Gastrocnemius medialis (tissue), 4 donors: ENCODE measurements at regions of chr2 and their contacts with region 1.

Region 1: GRCh38 chr2:130342533-130343275 is at the start of gene IMP4:
- DNase-seq: peak; percentile 99
- ATAC-seq: peak; percentile 96 to 97
- H3K4me3 ChIP-seq: peak within 1 kb of the TSS; percentile 76 to 99 (median 89)
- H3K27ac ChIP-seq: peak within 1 kb of the TSS; percentile 87 to 91 (median 88)
- H3K4me1 ChIP-seq: peaks cover 14 to 21% of the 10 kb centered on the region in 2 donors
- H3K27me3 ChIP-seq: no peaks in the 10 kb centered on the region
- CTCF ChIP-seq: peak in 4 of 5 experiments; percentile 19 to 35 (median 31)
- POLR2A ChIP-seq: peak; percentile 46 to 67
- total RNA-seq, gene IMP4: 114 to 179 (median 149) TPM

Region 2: DNA sequence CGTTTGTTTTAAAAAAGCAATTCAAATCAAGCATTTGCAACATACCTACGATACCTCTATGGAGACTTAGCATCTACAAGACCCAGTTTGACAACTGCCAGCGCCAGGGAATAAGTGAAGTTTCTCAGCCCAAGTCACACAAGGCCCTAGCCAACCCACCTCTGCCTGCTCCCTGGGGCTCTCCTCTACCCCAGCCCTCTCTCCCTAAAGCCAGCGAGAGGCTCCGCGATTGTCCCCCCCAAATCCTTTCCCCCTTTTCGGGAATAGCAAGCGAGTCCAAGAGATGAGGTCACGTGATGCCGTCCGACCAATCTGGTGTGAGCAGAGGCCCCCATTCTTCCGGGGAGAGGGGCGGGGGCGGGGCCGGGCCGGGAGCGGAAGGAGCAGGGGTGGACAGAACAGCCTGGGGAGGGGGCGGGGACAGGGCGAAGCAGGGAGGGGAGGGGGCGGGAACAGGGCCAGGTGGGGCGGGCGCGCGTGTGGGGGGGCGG is 465.4 kb before region 1 on chr2:
- in situ Hi-C with region 1: no loop called
- intact Hi-C with region 1: loop called (anchors 5 kb)
- DNase-seq: peak; percentile 86 to 89
- ATAC-seq: peak; percentile 87 to 91
- H3K4me3 ChIP-seq: peak overlapping the region; percentile 73 to 91 (median 83)
- H3K27ac ChIP-seq: peak overlapping the region; percentile 80 to 85 (median 83)
- H3K4me1 ChIP-seq: peaks cover 5 to 12% of the 10 kb centered on the region in 2 donors
- H3K27me3 ChIP-seq: no peaks in the 10 kb centered on the region
- CTCF ChIP-seq: no peak
- POLR2A ChIP-seq: no peak

Region 3: DNA sequence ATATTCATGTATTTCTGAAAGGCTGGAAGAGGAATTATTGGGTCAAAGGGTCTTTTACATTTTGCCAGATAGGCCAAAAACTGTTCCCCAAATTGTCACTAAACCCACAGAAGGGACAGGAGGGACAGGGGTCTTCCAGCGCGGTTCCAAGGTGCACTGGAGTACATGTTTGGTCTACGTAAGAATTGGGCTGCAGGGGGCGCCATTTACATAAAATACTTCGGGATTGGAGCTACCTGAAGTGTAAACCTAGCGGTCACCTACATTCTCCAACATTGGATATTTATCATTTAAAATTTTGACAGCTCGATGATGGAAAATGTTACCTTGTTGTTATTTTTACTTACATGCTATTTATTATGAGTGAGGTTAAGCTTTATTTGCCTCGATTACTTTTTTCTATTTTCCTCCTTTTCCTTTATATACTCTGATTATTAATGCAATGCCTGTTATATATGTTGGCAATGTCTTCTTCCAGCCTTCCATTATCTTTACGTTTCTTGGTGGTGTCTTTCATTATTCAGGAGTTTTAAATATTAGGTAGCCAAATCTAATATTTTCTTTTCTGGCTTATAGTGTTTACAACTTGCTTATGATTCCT is 406.3 kb before region 1 on chr2:
- in situ Hi-C with region 1: loop called in 1 of 4 experiments (anchors 25 kb)
- intact Hi-C with region 1: no loop called
- DNase-seq: no peak
- ATAC-seq: no peak
- H3K4me3 ChIP-seq: no peak overlapping the region
- H3K27ac ChIP-seq: no peak overlapping the region
- H3K4me1 ChIP-seq: no peaks in the 10 kb centered on the region
- H3K27me3 ChIP-seq: peaks cover 4 to 7% (median 5%) of the 10 kb centered on the region in 3 donors
- CTCF ChIP-seq: peak in 1 of 5 experiments; percentile 22
- POLR2A ChIP-seq: no peak

Region 4: DNA sequence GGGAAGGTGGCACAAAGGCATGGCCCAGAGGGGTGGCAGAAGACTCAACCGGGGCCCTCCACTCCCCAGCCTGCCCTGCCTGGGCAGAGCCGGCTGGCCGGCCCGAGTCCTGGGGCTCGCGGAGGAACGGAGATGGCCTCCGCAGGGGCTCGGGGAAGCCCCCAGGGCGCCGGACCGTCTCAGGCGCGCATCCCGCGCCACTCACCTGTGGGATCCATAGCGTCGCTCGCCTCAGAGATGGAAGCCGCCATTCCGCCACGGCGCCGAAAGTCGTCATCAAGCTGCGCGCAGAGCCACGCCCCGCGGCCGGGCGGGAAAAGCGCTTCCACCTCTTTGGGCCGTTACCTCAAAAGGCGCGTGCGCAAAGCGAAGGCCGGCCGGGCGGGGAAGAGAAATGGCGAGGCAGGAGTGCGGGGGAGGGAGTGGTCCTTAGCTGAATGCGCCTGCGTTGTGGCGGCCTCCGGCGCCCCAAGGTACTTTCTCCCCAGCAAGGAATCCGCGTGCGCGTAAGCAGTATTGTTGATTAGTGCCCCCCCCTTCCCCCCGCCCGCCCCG is 161.3 kb before region 1 on chr2 and contains the start of gene SMPD4:
- in situ Hi-C with region 1: loop called (anchors 5 to 25 kb)
- intact Hi-C with region 1: loop called (anchors 2 kb)
- DNase-seq: peak; percentile 91 to 94
- ATAC-seq: peak; percentile 94 to 95
- H3K4me3 ChIP-seq: peak within 1 kb of the TSS; percentile 88 to 99 (median 93)
- H3K27ac ChIP-seq: peak within 1 kb of the TSS; percentile 88 to 93 (median 91)
- H3K4me1 ChIP-seq: peaks cover 5 to 11% of the 10 kb centered on the region in 2 donors
- H3K27me3 ChIP-seq: no peaks in the 10 kb centered on the region
- CTCF ChIP-seq: no peak
- POLR2A ChIP-seq: no peak
- total RNA-seq, gene SMPD4: 19.5 to 33.4 (median 24.5) TPM

Region 5: DNA sequence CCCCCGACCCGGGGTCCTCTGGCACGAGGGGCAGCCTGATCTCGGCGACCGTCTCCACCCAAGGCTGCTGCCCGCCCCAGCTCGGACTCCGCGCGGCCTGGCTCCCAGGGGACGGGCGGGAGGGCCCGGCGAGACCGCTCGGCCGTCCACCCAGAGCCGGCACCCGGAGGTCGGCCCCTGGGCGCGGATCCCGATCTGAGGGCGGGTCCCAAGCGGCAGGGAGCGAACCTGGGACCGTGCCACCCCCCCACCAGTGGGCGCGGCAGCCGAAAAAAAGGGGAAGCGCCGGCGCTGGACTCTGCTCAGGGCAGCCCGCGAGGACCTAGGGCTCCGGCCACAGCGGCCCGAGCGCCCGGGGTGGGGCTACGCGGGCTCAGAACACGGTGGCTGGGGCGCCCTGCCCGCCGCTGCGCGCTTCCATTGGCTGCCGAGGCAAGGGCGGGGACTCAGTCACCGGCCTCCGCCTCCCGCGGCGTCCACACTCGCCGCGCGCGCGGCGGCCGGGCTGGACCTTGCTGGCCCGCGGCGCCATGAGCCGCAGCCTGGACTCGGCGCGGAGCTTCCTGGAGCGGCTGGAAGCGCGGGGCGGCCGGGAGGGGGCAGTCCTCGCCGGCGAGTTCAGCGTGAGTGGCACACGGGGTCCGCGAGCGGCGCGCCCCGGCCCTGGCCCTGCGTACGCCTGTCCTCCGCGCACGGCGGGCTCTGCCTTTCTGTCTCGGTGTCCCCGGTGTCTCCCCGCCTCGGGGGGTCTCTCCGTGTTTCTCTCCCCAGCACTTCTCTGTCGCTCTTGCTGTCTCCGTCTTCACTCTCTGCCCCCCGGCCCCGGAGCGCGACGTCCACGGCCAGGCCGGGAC is 13.1 kb after region 1 on chr2 and contains the start of gene PTPN18:
- in situ Hi-C with region 1: no loop called
- intact Hi-C with region 1: loop called (anchors 1 kb)
- DNase-seq: peak; percentile 83 to 89
- ATAC-seq: peak; percentile 92 to 93
- H3K4me3 ChIP-seq: peak within 1 kb of the TSS; percentile 71 to 87 (median 75)
- H3K27ac ChIP-seq: peak within 1 kb of the TSS; percentile 75 to 88 (median 86)
- H3K4me1 ChIP-seq: peaks cover 13 to 21% of the 10 kb centered on the region in 2 donors
- H3K27me3 ChIP-seq: no peaks in the 10 kb centered on the region
- CTCF ChIP-seq: peak; percentile 58 to 74 (median 72)
- POLR2A ChIP-seq: peak; percentile 86 to 90
- total RNA-seq, gene PTPN18: 3.0 to 15.2 (median 7.0) TPM

Region 6: GRCh38 chr2:130884503-130884902 is 541.8 kb after region 1 on chr2:
- in situ Hi-C with region 1: no loop called
- intact Hi-C with region 1: no loop called
- DNase-seq: no peak
- ATAC-seq: no peak
- H3K4me3 ChIP-seq: no peak overlapping the region
- H3K27ac ChIP-seq: no peak overlapping the region
- H3K4me1 ChIP-seq: no peaks in the 10 kb centered on the region
- H3K27me3 ChIP-seq: no peaks in the 10 kb centered on the region
- CTCF ChIP-seq: no peak
- POLR2A ChIP-seq: no peak

Region 7: GRCh38 chr2:131093006-131093695 is 750.4 kb after region 1 on chr2 and contains the start of gene FAM168B:
- in situ Hi-C with region 1: no loop called
- intact Hi-C with region 1: loop called (anchors 5 kb)
- DNase-seq: peak; percentile 72 to 87
- ATAC-seq: peak; percentile 94 to 95
- H3K4me3 ChIP-seq: peak within 1 kb of the TSS; percentile 54 to 77 (median 75)
- H3K27ac ChIP-seq: peak within 1 kb of the TSS; percentile 82 to 95 (median 88)
- H3K4me1 ChIP-seq: peaks cover 9 to 17% of the 10 kb centered on the region in 2 donors
- H3K27me3 ChIP-seq: no peaks in the 10 kb centered on the region
- CTCF ChIP-seq: peak in 3 of 5 experiments; percentile 10 to 26 (median 22)
- POLR2A ChIP-seq: peak; percentile 99 to 100
- total RNA-seq, gene FAM168B: 147 to 172 (median 157) TPM

Region 8: DNA sequence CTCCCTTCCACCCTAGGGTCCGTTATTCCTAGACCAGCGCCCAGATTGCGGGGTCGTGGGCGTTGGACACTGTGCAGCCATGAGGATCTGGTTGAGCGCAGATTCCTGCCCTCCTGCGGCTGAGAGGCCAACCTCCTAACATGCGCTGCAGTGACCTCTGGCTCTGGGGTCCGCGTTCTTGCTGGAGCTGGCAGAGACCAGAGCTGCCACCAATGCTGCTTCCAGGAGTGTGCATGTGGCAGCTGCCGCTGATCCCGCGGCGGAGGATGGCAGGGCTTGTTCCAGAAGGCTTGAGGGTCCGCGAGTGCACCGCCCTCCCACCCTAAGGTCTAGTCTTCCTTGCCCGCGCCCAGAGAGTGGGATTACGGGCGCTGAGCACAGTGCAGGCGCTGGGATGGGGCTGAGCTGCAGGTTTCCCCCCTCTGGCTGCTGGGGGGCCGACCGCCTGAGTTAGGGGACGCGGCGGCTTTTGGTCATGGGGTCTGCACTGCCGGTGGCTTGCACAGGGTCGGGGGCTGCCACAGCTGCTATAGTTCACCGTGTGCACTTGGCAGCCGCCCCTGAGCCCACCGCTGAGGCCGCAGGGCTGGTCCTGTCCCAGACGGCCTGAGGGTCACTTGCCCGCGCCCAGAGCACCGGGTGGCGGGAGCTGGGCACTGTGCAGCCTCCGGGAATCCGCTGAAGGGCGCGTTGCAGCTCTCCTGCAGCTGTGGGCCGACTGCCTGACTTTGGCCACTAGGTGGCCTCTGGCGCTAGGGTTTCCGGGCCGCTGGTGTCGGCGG is 1330.9 kb after region 1 on chr2:
- in situ Hi-C with region 1: no loop called
- intact Hi-C with region 1: loop called (anchors 5 kb)
- DNase-seq: peak; percentile 35 to 65
- ATAC-seq: peak; percentile 69 to 82
- H3K4me3 ChIP-seq: peak overlapping the region; percentile 30 to 69 (median 43)
- H3K27ac ChIP-seq: no peak overlapping the region
- H3K4me1 ChIP-seq: peaks cover 6 to 23% of the 10 kb centered on the region in 2 donors
- H3K27me3 ChIP-seq: peaks cover 0 to 4% (median 0%) of the 10 kb centered on the region in 3 donors
- CTCF ChIP-seq: peak; percentile 67 to 93 (median 78)
- POLR2A ChIP-seq: no peak